Naive thymus-derived CD4-positive, alpha-beta T cell (primary cell): ENCODE measurements at regions of chr1 and their contacts with region 1.

Region 1: GRCh38 chr1:31315902-31316301 is 19.1 kb downstream of the ZCCHC17 start:
- DNase-seq: no peak
- ATAC-seq: no peak
- H3K4me3 ChIP-seq: no peak overlapping the region
- H3K4me3 Mint-ChIP-seq: no peak overlapping the region
- H3K27ac ChIP-seq: no peak overlapping the region
- H3K27ac Mint-ChIP-seq: no peak overlapping the region
- H3K4me1 ChIP-seq: no peaks in the 10 kb centered on the region
- H3K4me1 Mint-ChIP-seq: peaks cover 0 to 5% (median 0%) of the 10 kb centered on the region in 7 donors
- H3K27me3 ChIP-seq: no peaks in the 10 kb centered on the region
- H3K27me3 Mint-ChIP-seq: no peaks in the 10 kb centered on the region

Region 2: DNA sequence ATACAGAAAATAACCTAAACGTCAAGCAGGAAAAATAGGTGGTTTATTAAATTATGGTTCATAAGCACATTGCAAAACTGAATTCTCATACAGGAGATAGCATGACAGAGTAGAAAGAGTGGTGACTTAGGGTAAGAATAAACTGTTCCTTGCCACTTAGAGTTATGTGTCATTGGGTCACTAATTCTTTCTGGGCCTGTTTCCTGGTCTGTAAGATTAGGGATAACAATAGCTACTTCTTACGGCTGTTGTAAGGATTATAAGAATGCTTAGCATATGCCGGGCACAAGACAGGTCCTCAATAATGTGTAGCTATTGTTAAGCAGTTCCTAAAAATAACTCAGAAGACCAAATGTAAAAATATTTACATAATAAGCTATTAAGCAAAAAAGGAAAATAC is 43.5 kb before region 1 on chr1:
- CTCF ChIA-PET with region 1: no interaction called
- POLR2A ChIA-PET with region 1: no interaction called
- intact Hi-C with region 1: loop called in 1 of 2 experiments (anchors 5 kb)
- DNase-seq: no peak
- ATAC-seq: no peak
- H3K4me3 ChIP-seq: no peak overlapping the region
- H3K4me3 Mint-ChIP-seq: no peak overlapping the region
- H3K27ac ChIP-seq: no peak overlapping the region
- H3K27ac Mint-ChIP-seq: no peak overlapping the region
- H3K4me1 ChIP-seq: no peaks in the 10 kb centered on the region
- H3K4me1 Mint-ChIP-seq: peaks cover 0 to 9% (median 4%) of the 10 kb centered on the region in 7 donors
- H3K27me3 ChIP-seq: no peaks in the 10 kb centered on the region
- H3K27me3 Mint-ChIP-seq: no peaks in the 10 kb centered on the region

Region 3: DNA sequence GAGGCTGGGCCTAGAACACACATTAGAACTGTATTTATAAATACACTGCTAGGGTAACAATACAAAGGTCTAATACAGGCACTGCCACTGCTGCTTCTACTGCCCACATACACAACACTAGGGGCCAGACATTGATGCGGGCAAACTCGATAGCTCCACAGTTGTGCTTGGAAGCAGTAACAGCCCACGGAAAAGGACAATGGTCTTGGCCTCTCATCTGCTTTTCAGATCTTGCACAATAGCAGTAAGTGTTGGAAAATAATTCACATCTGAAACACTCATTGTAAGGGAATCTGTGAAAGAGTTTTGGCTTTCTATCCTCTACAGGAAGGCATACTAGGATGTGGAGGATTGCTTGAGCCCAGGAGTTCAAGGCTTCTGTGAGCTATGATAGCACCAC is 506.9 kb after region 1 on chr1:
- CTCF ChIA-PET with region 1: no interaction called
- POLR2A ChIA-PET with region 1: no interaction called
- intact Hi-C with region 1: no loop called
- DNase-seq: no peak
- ATAC-seq: no peak
- H3K4me3 ChIP-seq: no peak overlapping the region
- H3K4me3 Mint-ChIP-seq: no peak overlapping the region
- H3K27ac ChIP-seq: no peak overlapping the region
- H3K27ac Mint-ChIP-seq: peak overlapping the region in 1 of 9 donors; percentile 25
- H3K4me1 ChIP-seq: peaks cover 19% of the 10 kb centered on the region in 2 donors
- H3K4me1 Mint-ChIP-seq: peaks cover 11 to 24% (median 17%) of the 10 kb centered on the region in 7 donors
- H3K27me3 ChIP-seq: no peaks in the 10 kb centered on the region
- H3K27me3 Mint-ChIP-seq: no peaks in the 10 kb centered on the region